Activated T-helper 2 cell treated with anti-CD3 and anti-CD28 coated beads, Interferon-gamma antibody, Interleukin-2, Interleukin-4, amounts not matched to agents 10 μg/mL and 5 μg/mL and 100 μg/mL, durations not matched to agents 14 hours and 24 hours and 36 hours (primary cell): ENCODE measurements at regions of chr14 and their contacts with region 1.

Region 1: DNA sequence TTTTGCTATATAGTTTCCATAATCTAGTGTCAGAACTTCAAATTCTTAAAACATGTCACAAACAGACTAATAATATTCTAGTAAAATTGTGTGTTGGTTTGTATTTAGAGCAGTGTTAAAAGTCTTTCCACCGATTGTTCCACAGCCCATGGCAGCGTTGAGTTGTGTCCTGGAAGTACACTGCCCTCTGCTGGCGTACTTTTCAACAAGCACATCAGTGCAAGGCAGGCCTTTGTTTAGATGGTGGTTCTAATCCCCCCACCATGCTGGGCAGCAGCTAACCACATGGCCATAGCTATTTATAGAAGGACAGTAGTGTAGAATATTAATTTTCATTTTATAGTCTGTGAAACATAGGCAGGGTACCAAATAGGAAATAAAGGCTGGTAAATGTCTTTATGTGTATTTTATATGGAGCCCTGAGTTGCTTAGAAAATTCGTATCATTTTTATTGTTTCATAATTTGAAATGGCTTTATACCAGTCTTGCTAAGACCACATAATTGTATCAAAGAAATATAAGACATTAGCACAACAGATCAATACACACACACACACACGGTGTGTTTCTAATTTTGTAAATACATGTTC is 235.4 kb downstream of the SEC23A start:
- DNase-seq: peak; percentile 30
- H3K4me3 Mint-ChIP-seq: no peak overlapping the region
- H3K27ac Mint-ChIP-seq: no peak overlapping the region
- H3K4me1 Mint-ChIP-seq: no peaks in the 10 kb centered on the region
- H3K27me3 Mint-ChIP-seq: no peaks in the 10 kb centered on the region

Region 2: GRCh38 chr14:38721822-38722431 is 145.7 kb before region 1 on chr14:
- intact Hi-C with region 1: loop called (anchors 2 kb)
- DNase-seq: no peak
- H3K4me3 Mint-ChIP-seq: no peak overlapping the region
- H3K27ac Mint-ChIP-seq: no peak overlapping the region
- H3K4me1 Mint-ChIP-seq: no peaks in the 10 kb centered on the region
- H3K27me3 Mint-ChIP-seq: no peaks in the 10 kb centered on the region

Region 3: DNA sequence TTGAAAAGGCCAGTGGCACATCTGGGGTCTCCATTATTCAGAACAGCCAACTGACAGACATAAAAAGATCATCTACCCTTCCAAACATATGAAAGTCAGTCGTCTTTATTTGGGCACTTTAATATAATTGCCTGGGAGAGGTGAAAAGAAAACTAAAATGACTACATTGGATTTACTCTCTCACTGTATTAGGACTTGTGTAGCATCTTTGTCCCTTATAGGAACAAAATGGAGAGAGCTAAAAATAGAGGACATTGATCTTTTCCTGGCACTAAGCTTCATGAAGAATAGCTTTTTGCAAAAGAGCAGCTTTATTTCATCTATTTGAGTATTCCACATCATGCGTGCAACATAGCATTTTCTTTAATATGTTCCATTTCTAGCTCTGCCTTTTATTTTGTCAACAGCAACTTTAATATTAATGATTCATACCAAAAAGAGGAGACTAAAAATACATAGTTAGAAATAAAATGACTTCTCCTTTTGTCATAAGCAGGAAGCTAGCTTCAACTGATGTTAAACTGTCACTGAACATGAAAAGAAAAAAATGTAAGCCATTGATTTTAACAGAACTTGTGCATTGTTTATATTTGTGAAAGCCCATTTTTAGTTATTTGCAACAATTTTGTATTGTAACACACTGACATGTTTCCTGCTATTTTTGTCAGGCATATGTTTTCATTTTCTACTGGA is 19.3 kb before region 1 on chr14:
- intact Hi-C with region 1: no loop called
- DNase-seq: no peak
- H3K4me3 Mint-ChIP-seq: no peak overlapping the region
- H3K27ac Mint-ChIP-seq: no peak overlapping the region
- H3K4me1 Mint-ChIP-seq: no peaks in the 10 kb centered on the region
- H3K27me3 Mint-ChIP-seq: no peaks in the 10 kb centered on the region